OCI-LY7 (cell line): ENCODE measurements at regions of chr3 and their contacts with region 1.

Region 1: GRCh38 chr3:50272911-50273693 is 4.2 kb downstream of the SEMA3B start:
- DNase-seq: peak; percentile 83
- H3K4me3 ChIP-seq: no peak overlapping the region
- H3K27ac ChIP-seq: no peak overlapping the region
- H3K4me1 ChIP-seq: peaks cover 5% of the 10 kb centered on the region
- CTCF ChIP-seq: peak; percentile 93

Region 2: GRCh38 chr3:50121416-50122032 is 151.6 kb before region 1 on chr3:
- CTCF ChIA-PET with region 1: no interaction called
- POLR2A ChIA-PET with region 1: no interaction called
- intact Hi-C with region 1: loop called (anchors 2 kb)
- DNase-seq: peak; percentile 78
- H3K4me3 ChIP-seq: no peak overlapping the region
- H3K27ac ChIP-seq: no peak overlapping the region
- H3K4me1 ChIP-seq: no peaks in the 10 kb centered on the region
- CTCF ChIP-seq: peak; percentile 90

Region 3: DNA sequence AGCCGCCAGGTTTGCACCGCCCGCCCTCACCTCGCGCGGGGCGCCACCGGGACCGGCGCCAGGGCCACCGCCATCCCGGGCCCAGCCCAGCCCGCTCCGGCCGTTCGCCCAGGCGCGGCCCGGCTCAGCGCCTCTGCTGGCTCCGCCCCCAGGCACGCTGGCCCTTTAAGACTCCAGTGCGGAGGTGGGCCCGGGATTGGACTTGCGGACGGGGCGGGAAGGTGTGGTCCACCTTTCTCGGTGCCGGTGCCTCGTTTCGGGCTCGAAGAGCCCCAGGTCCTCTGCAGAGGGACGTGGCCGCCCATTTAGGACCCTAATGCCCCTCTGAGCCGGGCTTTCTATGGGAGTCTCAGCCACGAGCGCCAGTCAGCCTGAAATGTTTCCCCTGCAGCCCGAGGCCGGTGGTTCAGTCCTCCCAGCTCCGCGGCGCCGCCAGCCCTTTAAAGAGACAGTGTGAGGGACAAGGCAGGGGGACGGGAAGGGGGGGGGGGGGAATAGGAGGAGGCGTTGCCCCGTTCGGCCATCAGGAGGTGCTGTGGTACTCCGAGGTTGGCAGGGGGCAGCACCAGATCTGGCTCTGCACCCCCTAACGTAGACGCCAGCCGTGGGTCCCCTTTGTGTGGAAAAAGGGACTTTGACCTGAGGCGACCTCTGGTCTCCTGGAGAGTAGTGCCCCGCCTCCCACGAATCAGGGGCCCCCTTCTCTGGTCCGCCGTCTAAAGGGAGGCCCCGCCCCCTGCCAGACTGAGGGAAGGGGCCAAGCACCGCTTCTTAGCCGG is 48.4 kb after region 1 on chr3:
- CTCF ChIA-PET with region 1: no interaction called
- POLR2A ChIA-PET with region 1: no interaction called
- intact Hi-C with region 1: loop called (anchors 1 kb)
- DNase-seq: peak; percentile 92
- H3K4me3 ChIP-seq: peak overlapping the region; percentile 72
- H3K27ac ChIP-seq: peak overlapping the region; percentile 51
- H3K4me1 ChIP-seq: peaks cover 45% of the 10 kb centered on the region
- CTCF ChIP-seq: peak; percentile 75

Region 4: DNA sequence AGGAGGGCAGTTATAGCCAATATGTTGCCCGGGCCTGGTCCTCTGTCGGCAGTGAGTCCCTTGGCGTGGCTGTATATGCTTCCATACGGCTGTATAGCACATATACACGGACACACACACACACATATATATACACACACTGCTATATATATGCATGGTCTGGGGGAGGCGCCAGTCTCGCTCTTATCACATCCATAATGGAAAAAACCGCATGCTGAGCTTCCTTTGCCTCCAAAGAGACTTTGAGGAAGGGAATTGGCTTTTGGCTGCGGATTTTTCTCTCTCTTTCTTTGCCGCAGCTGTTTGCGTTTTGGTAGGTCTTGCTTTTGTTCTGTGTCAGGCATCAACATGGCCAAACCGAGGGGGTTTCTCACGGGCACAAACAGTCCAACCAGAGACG is 97.5 kb after region 1 on chr3:
- CTCF ChIA-PET with region 1: no interaction called
- POLR2A ChIA-PET with region 1: no interaction called
- intact Hi-C with region 1: no loop called
- DNase-seq: peak; percentile 26
- H3K4me3 ChIP-seq: no peak overlapping the region
- H3K27ac ChIP-seq: no peak overlapping the region
- H3K4me1 ChIP-seq: peaks cover 4% of the 10 kb centered on the region
- CTCF ChIP-seq: peak; percentile 62